Left ventricle myocardium inferior (tissue), 1 donor: ENCODE measurements at regions of chr12 and their contacts with region 1.

Region 1: GRCh38 chr12:89524541-89525285 is at the start of gene GALNT4:
- DNase-seq: peak; percentile 86
- H3K4me3 ChIP-seq: peak within 1 kb of the TSS; percentile 95
- H3K27ac ChIP-seq: peak within 1 kb of the TSS; percentile 95
- H3K4me1 ChIP-seq: peaks cover 73% of the 10 kb centered on the region
- H3K27me3 ChIP-seq: no peaks in the 10 kb centered on the region
- CTCF ChIP-seq: peak; percentile 79
- total RNA-seq, gene GALNT4: 2.1 TPM

Region 2: GRCh38 chr12:89019408-89020120 is 505.1 kb before region 1 on chr12:
- intact Hi-C with region 1: loop called (anchors 5 kb)
- DNase-seq: peak; percentile 46
- H3K4me3 ChIP-seq: peak overlapping the region; percentile 50
- H3K27ac ChIP-seq: no peak overlapping the region
- H3K4me1 ChIP-seq: peaks cover 12% of the 10 kb centered on the region
- H3K27me3 ChIP-seq: no peaks in the 10 kb centered on the region
- CTCF ChIP-seq: peak; percentile 93

Region 3: GRCh38 chr12:89470741-89471509 is 53.8 kb before region 1 on chr12:
- intact Hi-C with region 1: loop called (anchors 5 kb)
- DNase-seq: no peak
- H3K4me3 ChIP-seq: no peak overlapping the region
- H3K27ac ChIP-seq: no peak overlapping the region
- H3K4me1 ChIP-seq: no peaks in the 10 kb centered on the region
- H3K27me3 ChIP-seq: no peaks in the 10 kb centered on the region
- CTCF ChIP-seq: peak; percentile 78